Activated CD4-positive, alpha-beta T cell treated with anti-CD3 and anti-CD28 coated beads for 36 hours (primary cell): ENCODE measurements at regions of chr13 and their contacts with region 1.

Region 1: GRCh38 chr13:107211073-107211472 is 643.1 kb upstream of the ARGLU1 start:
- DNase-seq: peak; percentile 74
- ATAC-seq: peak; percentile 77
- H3K4me3 Mint-ChIP-seq: no peak overlapping the region
- H3K27ac Mint-ChIP-seq: no peak overlapping the region
- H3K4me1 Mint-ChIP-seq: no peaks in the 10 kb centered on the region
- H3K27me3 Mint-ChIP-seq: peaks cover 4% of the 10 kb centered on the region

Region 2: GRCh38 chr13:106520205-106521054 is 690.6 kb before region 1 on chr13:
- CTCF ChIA-PET with region 1: no interaction called
- POLR2A ChIA-PET with region 1: no interaction called
- intact Hi-C with region 1: no loop called
- DNase-seq: no peak
- ATAC-seq: no peak
- H3K4me3 Mint-ChIP-seq: no peak overlapping the region
- H3K27ac Mint-ChIP-seq: no peak overlapping the region
- H3K4me1 Mint-ChIP-seq: no peaks in the 10 kb centered on the region
- H3K27me3 Mint-ChIP-seq: peaks cover 10% of the 10 kb centered on the region

Region 3: DNA sequence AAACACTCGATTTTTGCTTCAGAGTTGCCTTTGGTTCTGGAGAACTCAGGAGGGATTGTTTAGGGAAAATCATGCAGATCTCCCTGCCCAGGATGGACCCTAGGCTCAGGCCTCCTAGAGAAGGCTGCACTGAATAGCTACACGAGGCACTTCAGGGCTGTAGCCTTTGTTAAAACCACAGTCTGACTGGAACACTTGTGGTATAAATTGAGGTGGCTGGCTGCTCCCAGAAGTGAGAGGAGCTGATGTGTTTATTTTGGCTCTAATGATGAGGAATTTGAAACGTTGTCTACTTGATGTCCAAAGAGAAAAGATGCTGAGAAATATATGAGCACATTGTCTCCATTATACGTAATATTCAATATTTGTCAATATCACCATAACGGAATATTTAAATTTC is 118.9 kb after region 1 on chr13:
- CTCF ChIA-PET with region 1: no interaction called
- POLR2A ChIA-PET with region 1: no interaction called
- intact Hi-C with region 1: no loop called
- DNase-seq: no peak
- ATAC-seq: no peak
- H3K4me3 Mint-ChIP-seq: no peak overlapping the region
- H3K27ac Mint-ChIP-seq: no peak overlapping the region
- H3K4me1 Mint-ChIP-seq: no peaks in the 10 kb centered on the region
- H3K27me3 Mint-ChIP-seq: no peaks in the 10 kb centered on the region

Region 4: DNA sequence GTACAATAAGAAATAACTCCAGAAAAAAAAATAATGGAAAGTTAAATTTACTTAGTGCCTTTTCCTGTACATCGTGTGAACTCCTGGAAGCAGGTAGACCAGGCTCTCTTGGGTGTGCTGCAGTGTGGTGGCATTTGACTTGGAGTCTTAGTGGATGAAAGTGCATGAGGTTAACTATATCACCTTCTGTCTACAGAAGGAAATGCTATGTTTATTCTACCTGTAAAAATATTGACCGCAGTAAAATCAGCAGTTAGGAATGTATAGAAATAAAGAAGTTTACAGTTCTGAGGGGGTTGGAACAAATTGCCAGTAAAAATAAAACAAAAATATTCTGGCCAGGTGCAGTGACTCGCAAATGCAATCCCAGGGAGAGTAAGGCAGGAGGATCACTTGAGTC is 282.2 kb after region 1 on chr13:
- CTCF ChIA-PET with region 1: no interaction called
- POLR2A ChIA-PET with region 1: no interaction called
- intact Hi-C with region 1: no loop called
- DNase-seq: no peak
- ATAC-seq: no peak
- H3K4me3 Mint-ChIP-seq: no peak overlapping the region
- H3K27ac Mint-ChIP-seq: no peak overlapping the region
- H3K4me1 Mint-ChIP-seq: no peaks in the 10 kb centered on the region
- H3K27me3 Mint-ChIP-seq: no peaks in the 10 kb centered on the region

Region 5: GRCh38 chr13:107867701-107868661 is 656.9 kb after region 1 on chr13:
- CTCF ChIA-PET with region 1: interaction called, 3 read pairs
- POLR2A ChIA-PET with region 1: no interaction called
- intact Hi-C with region 1: loop called in 1 of 2 experiments (anchors 5 kb)
- DNase-seq: peak; percentile 29
- ATAC-seq: no peak
- H3K4me3 Mint-ChIP-seq: peak overlapping the region; percentile 51
- H3K27ac Mint-ChIP-seq: no peak overlapping the region
- H3K4me1 Mint-ChIP-seq: peaks cover 8% of the 10 kb centered on the region
- H3K27me3 Mint-ChIP-seq: peaks cover 43% of the 10 kb centered on the region